ENCODE measurements at regions of chr16 and their contacts with region 1.

Region 1: GRCh38 chr16:56851671-56852400 is 13.2 kb upstream of the SLC12A3 start:
- DNase-seq: peak in 1 of 2 experiments; percentile 11
- H3K4me3 ChIP-seq: no peak overlapping the region
- H3K27ac ChIP-seq: no peak overlapping the region
- H3K4me1 ChIP-seq: peaks cover 28% of the 10 kb centered on the region
- H3K27me3 ChIP-seq: no peaks in the 10 kb centered on the region
- CTCF ChIP-seq: peak; percentile 63

Region 2: GRCh38 chr16:55513616-55514015 is 1338.2 kb before region 1 on chr16:
- CTCF ChIA-PET with region 1: no interaction called
- POLR2A ChIA-PET with region 1: no interaction called
- intact Hi-C with region 1: no loop called
- DNase-seq: no peak
- H3K4me3 ChIP-seq: no peak overlapping the region
- H3K27ac ChIP-seq: no peak overlapping the region
- H3K4me1 ChIP-seq: peaks cover 16% of the 10 kb centered on the region
- H3K27me3 ChIP-seq: no peaks in the 10 kb centered on the region
- CTCF ChIP-seq: 0 out of 2 replicates have a peak, but pooled peaks have one; percentile 14

Region 3: DNA sequence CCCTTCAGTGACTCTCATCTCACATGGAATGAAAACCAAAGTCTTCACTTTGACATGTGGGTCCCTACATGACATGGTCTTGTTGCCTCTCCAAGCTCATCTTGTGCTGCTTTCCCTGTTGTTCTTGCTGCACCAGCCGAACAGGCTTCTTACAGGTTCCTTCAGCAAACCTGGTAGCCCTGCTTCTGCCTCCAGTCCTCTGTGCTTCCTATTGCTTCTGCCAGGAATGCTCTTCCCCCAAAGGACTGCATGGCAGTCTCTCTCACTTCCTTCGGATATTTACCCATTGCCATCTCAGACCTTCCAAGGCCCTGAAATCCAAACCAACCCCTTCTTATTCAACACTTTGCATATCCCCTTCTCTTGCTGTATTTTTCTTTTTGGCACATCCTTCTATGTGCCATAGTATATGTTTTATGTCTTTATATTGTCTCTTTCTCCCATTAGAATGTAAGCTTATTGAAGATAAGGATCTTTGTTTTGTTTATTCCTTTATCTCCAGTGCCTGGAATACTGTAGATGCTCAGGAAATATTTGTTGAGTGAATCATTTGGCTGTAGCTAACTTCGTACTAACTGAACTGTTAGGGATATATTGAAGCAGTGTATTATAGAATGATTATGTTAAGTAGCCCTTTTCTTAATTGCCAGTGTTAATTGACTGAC is 44.7 kb before region 1 on chr16:
- CTCF ChIA-PET with region 1: no interaction called
- POLR2A ChIA-PET with region 1: interaction called, 4 read pairs
- intact Hi-C with region 1: loop called (anchors 1 kb)
- DNase-seq: peak; percentile 58 to 71
- H3K4me3 ChIP-seq: no peak overlapping the region
- H3K27ac ChIP-seq: peak overlapping the region; percentile 21
- H3K4me1 ChIP-seq: peaks cover 28% of the 10 kb centered on the region
- H3K27me3 ChIP-seq: no peaks in the 10 kb centered on the region
- CTCF ChIP-seq: no peak

Region 4: DNA sequence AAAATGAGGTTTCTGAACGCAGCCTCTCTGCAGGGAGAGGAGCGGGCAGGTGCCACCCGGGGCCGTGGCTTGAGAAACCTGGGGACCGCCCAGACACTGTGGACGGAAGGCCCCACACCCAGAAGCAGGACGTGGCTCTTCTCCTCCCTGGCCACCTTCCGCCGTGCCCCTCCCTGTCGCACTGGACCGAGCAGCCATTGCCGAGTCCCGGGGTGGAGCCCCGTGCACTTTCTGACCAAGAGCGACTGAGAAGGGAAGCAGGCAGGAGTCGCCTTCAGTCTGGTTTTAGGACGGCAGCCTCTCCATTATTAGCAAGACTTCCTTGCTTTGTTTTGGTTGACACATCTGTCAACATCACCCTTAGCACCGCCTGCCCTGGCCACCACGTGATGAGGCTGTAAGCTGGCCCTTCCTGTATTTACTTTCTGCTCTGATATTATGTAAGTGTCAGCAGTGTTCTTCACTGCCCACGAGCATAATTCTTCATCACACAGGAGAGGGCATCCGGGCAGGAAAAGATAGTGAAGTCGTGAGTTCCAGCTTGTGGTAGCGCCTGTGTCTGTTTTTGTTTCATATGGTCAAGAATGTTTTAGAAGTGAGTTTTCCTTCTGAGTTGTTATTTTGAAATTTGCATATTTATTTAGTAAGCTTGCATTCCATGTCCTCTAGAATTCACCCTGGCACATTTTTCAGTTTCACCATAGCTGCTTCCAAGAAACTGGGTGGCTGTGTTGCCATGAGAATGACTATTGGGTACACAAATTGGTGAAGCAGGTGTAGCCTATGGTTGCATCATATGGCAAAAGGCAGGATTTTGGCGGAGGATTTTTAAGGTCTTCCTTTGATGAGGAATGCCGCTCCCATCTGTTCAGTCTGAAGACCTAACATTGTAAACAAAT is 81.1 kb after region 1 on chr16:
- CTCF ChIA-PET with region 1: interaction called, 12 read pairs
- POLR2A ChIA-PET with region 1: no interaction called
- intact Hi-C with region 1: no loop called
- DNase-seq: peak; percentile 66 to 84
- H3K4me3 ChIP-seq: peak overlapping the region; percentile 97
- H3K27ac ChIP-seq: peak overlapping the region; percentile 91
- H3K4me1 ChIP-seq: peaks cover 25% of the 10 kb centered on the region
- H3K27me3 ChIP-seq: no peaks in the 10 kb centered on the region
- CTCF ChIP-seq: no peak

Region 5: GRCh38 chr16:57152096-57153093 is 300.6 kb after region 1 on chr16:
- CTCF ChIA-PET with region 1: no interaction called
- POLR2A ChIA-PET with region 1: interaction called, 27 read pairs
- intact Hi-C with region 1: no loop called
- DNase-seq: no peak
- H3K4me3 ChIP-seq: no peak overlapping the region
- H3K27ac ChIP-seq: no peak overlapping the region
- H3K4me1 ChIP-seq: no peaks in the 10 kb centered on the region
- H3K27me3 ChIP-seq: no peaks in the 10 kb centered on the region
- CTCF ChIP-seq: no peak